Heart right ventricle (tissue), 16 donors: ENCODE measurements at regions of chrX and their contacts with region 1.

Region 1: GRCh38 chrX:69741721-69742120 is 125.8 kb downstream of the EDA start:
- DNase-seq: peak in 1 of 2 donors; percentile 12
- ATAC-seq: no peak
- H3K4me3 ChIP-seq: no peak overlapping the region
- H3K27ac ChIP-seq: no peak overlapping the region
- H3K4me1 ChIP-seq: no peaks in the 10 kb centered on the region
- H3K27me3 ChIP-seq: no peaks in the 10 kb centered on the region
- CTCF ChIP-seq: no peak

Region 2: DNA sequence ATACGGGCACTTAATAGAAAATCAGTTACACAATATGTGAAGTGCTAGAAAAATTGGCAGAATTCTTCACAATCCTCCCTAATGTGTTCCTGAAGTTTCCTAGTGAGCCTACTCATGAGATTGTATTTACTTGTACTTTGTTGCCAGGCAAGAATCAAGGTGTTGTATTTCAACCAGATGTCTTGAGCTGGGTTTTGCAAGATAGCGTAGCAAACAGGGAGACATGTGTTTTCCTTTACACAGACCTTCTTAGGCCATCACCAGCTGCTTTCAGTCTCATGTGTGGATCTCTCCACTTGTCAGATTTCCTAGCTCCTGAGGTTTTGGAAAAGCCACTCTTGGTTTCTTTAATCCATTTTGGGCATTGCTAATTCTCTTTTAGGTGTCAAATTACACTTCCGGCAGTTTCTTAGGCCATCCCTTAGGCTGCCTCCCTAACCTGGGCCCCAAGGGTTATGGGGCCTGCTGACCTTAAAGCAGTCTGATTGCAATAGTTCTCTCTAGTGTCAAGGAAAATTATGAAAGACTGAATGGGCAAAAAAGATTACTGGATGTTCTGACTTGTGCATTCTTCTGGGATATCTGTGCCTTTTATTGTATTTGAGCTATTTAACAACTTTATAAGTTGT is 138.0 kb before region 1 on chrX:
- intact Hi-C with region 1: loop called in 1 of 10 experiments (anchors 5 kb)
- DNase-seq: no peak
- ATAC-seq: peak in 1 of 8 donors; percentile 15
- H3K4me3 ChIP-seq: no peak overlapping the region
- H3K27ac ChIP-seq: no peak overlapping the region
- H3K4me1 ChIP-seq: no peaks in the 10 kb centered on the region
- H3K27me3 ChIP-seq: peaks cover 0 to 55% (median 0%) of the 10 kb centered on the region in 7 donors
- CTCF ChIP-seq: no peak

Region 3: DNA sequence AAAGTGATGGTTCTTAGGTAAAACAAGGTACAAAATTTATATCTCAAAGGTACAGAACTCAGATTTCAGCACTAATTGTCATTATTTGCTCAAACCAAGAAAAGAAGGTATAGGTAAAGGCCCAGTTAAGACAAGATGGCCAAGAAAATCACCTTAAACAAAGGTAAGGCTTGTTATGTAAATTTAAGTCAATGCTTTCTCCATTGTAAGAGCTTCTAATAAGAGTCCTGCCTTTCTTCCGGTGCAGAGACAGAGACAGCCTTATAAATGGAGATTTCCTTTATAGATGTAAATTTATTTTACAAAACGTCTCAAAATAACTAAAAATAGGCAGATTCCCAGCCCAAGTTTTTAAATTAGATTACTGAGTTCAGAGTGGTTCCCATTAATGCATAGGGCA is 35.9 kb before region 1 on chrX:
- intact Hi-C with region 1: no loop called
- DNase-seq: no peak
- ATAC-seq: no peak
- H3K4me3 ChIP-seq: no peak overlapping the region
- H3K27ac ChIP-seq: no peak overlapping the region
- H3K4me1 ChIP-seq: no peaks in the 10 kb centered on the region
- H3K27me3 ChIP-seq: no peaks in the 10 kb centered on the region
- CTCF ChIP-seq: no peak